Mammary epithelial cell (primary cell): ENCODE measurements at regions of chr12 and their contacts with region 1.

Region 1: GRCh38 chr12:89461649-89462612 is 62.7 kb downstream of the GALNT4 start:
- DNase-seq: peak; percentile 71
- H3K4me3 ChIP-seq: peak overlapping the region in 2 of 3 experiments; percentile 25 to 34
- H3K27ac ChIP-seq: peak overlapping the region; percentile 31
- H3K4me1 ChIP-seq: peaks cover 22% of the 10 kb centered on the region
- H3K27me3 ChIP-seq: no peaks in the 10 kb centered on the region
- CTCF ChIP-seq: peak in 1 of 2 donors; percentile 52

Region 2: DNA sequence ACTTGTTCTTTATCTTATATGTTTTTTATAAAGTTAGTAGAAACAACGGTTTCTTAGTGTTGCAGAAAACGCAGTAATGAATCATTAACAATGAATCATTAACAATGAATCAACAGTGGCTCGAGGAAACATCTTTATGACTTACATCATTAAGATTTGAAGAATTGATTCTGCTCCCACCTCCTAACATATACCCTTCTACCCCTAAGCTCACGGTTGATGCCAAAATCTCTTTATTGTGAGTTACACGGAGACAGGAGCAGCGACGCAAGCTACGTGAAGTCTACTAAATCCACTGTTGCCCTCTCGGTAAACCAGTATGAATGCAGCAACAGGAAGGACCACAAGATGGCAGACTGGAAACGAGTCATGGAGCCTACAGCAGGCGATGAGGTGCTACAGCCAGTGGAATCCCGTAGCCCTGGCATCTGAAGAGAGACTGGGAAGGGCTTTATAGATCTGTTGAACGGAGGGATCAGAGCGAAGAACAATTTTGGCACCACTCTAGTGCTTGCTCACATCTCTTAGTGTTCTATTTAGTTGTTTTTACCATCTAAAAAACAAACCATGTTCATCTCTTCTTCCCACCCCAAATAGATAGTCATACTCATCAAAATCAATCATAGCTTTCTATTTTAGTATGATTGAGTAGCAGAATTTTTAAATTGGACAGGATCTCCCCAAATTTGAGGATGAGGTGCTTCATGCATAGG is 442.4 kb before region 1 on chr12:
- CTCF ChIA-PET with region 1: interaction called, 3 read pairs
- dilution Hi-C with region 1: no loop called
- in situ Hi-C with region 1: loop called (anchors 10 kb)
- intact Hi-C with region 1: loop called (anchors 1 kb)
- DNase-seq: peak; percentile 81
- H3K4me3 ChIP-seq: peak overlapping the region; percentile 18 to 49 (median 36)
- H3K27ac ChIP-seq: peak overlapping the region; percentile 57
- H3K4me1 ChIP-seq: peaks cover 16% of the 10 kb centered on the region
- H3K27me3 ChIP-seq: no peaks in the 10 kb centered on the region
- CTCF ChIP-seq: peak; percentile 92 to 93

Region 3: GRCh38 chr12:89051065-89051677 is 410.8 kb before region 1 on chr12:
- CTCF ChIA-PET with region 1: interaction called, 4 read pairs
- dilution Hi-C with region 1: loop called (anchors 10 kb)
- in situ Hi-C with region 1: loop called (anchors 10 kb)
- intact Hi-C with region 1: loop called (anchors 1 kb)
- DNase-seq: peak; percentile 64
- H3K4me3 ChIP-seq: no peak overlapping the region
- H3K27ac ChIP-seq: no peak overlapping the region
- H3K4me1 ChIP-seq: no peaks in the 10 kb centered on the region
- H3K27me3 ChIP-seq: no peaks in the 10 kb centered on the region
- CTCF ChIP-seq: peak; percentile 92 to 96

Region 4: GRCh38 chr12:89225808-89226411 is 236.0 kb before region 1 on chr12:
- CTCF ChIA-PET with region 1: no interaction called
- dilution Hi-C with region 1: no loop called
- in situ Hi-C with region 1: no loop called
- intact Hi-C with region 1: loop called (anchors 5 kb)
- DNase-seq: peak; percentile 99
- H3K4me3 ChIP-seq: peak overlapping the region in 1 of 3 experiments; percentile 5
- H3K27ac ChIP-seq: peak overlapping the region; percentile 96
- H3K4me1 ChIP-seq: peaks cover 37% of the 10 kb centered on the region
- H3K27me3 ChIP-seq: no peaks in the 10 kb centered on the region
- CTCF ChIP-seq: no peak

Region 5: DNA sequence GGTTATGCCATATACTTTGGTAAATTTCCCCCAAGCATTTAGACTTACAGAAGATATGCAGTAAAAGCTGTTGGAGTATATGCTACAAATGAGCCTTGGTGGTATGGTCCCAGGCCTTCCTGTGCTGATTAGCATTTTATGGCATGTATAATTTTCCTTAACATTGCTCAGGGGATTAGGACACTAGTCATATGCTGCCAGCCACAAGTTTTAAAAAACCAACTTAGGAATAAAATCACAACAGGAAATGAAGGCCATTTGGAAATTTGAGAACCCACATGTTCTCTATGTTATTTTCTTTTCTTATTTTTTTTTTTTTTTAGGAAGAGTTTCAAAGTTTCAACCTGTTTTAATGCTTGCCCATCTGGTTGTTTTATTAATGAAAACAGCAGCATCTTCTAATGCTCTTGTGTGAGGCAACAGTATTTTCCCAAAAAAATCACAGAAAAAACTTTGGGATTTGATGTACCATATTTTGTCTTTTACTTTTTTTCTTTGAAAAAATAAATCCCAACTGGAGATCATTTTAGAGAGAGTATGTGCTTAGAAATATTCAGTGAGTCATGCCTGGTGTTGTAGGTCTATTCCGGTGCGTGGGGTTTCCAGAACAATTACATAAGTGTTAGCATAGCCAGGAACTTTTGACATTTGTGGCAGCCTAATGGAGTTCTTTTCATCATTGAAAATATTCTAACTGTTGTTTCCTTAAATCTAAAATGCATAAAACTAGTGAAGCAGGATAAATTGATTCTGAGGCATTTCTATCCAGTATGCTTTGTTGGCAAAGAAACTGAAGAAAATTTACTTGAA is 88.0 kb before region 1 on chr12:
- CTCF ChIA-PET with region 1: no interaction called
- dilution Hi-C with region 1: no loop called
- in situ Hi-C with region 1: no loop called
- intact Hi-C with region 1: loop called (anchors 5 kb)
- DNase-seq: peak; percentile 81
- H3K4me3 ChIP-seq: no peak overlapping the region
- H3K27ac ChIP-seq: peak overlapping the region; percentile 95
- H3K4me1 ChIP-seq: peaks cover 80% of the 10 kb centered on the region
- H3K27me3 ChIP-seq: no peaks in the 10 kb centered on the region
- CTCF ChIP-seq: no peak

Region 6: GRCh38 chr12:89529738-89530137 is 67.8 kb after region 1 on chr12:
- CTCF ChIA-PET with region 1: no interaction called
- dilution Hi-C with region 1: no loop called
- in situ Hi-C with region 1: no loop called
- intact Hi-C with region 1: no loop called
- DNase-seq: peak; percentile 45
- H3K4me3 ChIP-seq: no peak overlapping the region
- H3K27ac ChIP-seq: no peak overlapping the region
- H3K4me1 ChIP-seq: no peaks in the 10 kb centered on the region
- H3K27me3 ChIP-seq: no peaks in the 10 kb centered on the region
- CTCF ChIP-seq: peak; percentile 75 to 76